ENCODE measurements at regions of chrX and their contacts with region 1.

Region 1: DNA sequence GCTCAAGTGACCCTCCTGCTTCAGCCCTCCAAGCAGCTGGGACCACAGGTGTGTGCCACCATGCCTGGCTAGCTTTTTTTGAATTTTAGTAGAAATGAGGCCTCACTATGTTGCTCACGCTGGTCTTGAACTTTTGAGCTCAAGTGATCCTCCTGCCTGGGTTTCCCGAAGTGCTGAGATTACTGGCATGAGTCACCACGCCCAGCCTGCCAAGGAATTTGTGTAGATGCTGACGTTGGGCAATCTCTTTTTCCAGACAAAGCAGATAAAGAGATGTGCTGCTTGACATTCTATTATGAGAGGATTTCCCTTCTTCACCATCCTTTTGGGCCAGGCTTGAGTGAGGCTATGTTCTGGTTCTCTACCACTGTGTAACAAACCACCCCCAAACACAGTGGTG is 254.5 kb upstream of the RPS6KA3 start:
- DNase-seq: no peak
- H3K4me3 Mint-ChIP-seq: no peak overlapping the region
- H3K27ac Mint-ChIP-seq: no peak overlapping the region
- H3K4me1 Mint-ChIP-seq: peaks cover 11% of the 10 kb centered on the region
- H3K27me3 Mint-ChIP-seq: peaks cover 13% of the 10 kb centered on the region

Region 2: GRCh38 chrX:19040373-19040772 is 1480.9 kb before region 1 on chrX:
- CTCF ChIA-PET with region 1: no interaction called
- intact Hi-C with region 1: no loop called
- DNase-seq: no peak
- H3K4me3 Mint-ChIP-seq: no peak overlapping the region
- H3K27ac Mint-ChIP-seq: no peak overlapping the region
- H3K4me1 Mint-ChIP-seq: no peaks in the 10 kb centered on the region
- H3K27me3 Mint-ChIP-seq: no peaks in the 10 kb centered on the region

Region 3: GRCh38 chrX:20252381-20253231 is 268.6 kb before region 1 on chrX:
- CTCF ChIA-PET with region 1: no interaction called
- intact Hi-C with region 1: loop called (anchors 5 kb)
- DNase-seq: peak; percentile 75
- H3K4me3 Mint-ChIP-seq: no peak overlapping the region
- H3K27ac Mint-ChIP-seq: peak overlapping the region; percentile 46
- H3K4me1 Mint-ChIP-seq: peaks cover 39% of the 10 kb centered on the region
- H3K27me3 Mint-ChIP-seq: no peaks in the 10 kb centered on the region

Measured in activated naive CD4-positive, alpha-beta T cell treated with anti-CD3 and anti-CD28 coated beads for 36 hours (primary cell).